GM23248 (cell line): ENCODE measurements at regions of chr10 and their contacts with region 1.

Region 1: DNA sequence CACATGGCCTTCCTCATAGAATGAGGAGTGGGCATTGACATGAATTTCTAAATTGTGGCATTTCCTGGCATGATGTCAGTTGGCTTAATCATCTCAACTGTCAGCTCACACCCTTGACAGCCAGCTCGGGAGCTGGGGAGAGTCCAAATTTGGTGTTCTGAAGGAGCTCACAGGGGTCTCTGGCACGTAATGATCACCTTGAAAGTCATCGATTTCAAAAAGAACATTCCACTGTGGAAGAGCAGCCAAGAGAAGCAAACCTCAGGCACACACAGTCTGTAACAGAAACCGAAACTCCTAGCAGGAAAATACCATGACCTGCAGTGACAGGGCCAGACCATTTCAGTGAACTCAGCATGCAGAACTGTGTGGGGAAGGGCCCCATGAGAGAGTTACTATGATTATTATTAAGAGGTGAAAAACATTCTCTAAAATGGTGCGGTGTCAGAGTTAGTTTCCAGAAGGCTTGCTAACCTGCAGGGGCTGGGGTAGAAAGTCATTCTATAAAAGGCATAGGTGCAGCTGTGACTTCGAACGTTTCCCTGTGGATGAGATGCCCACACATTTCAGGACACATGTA is 26.4 kb upstream of the KLF6 start:
- DNase-seq: peak; percentile 73
- H3K4me3 ChIP-seq: peak overlapping the region; percentile 41
- H3K27ac ChIP-seq: peak overlapping the region; percentile 88
- H3K4me1 ChIP-seq: peaks cover 57% of the 10 kb centered on the region
- H3K27me3 ChIP-seq: no peaks in the 10 kb centered on the region

Region 2: DNA sequence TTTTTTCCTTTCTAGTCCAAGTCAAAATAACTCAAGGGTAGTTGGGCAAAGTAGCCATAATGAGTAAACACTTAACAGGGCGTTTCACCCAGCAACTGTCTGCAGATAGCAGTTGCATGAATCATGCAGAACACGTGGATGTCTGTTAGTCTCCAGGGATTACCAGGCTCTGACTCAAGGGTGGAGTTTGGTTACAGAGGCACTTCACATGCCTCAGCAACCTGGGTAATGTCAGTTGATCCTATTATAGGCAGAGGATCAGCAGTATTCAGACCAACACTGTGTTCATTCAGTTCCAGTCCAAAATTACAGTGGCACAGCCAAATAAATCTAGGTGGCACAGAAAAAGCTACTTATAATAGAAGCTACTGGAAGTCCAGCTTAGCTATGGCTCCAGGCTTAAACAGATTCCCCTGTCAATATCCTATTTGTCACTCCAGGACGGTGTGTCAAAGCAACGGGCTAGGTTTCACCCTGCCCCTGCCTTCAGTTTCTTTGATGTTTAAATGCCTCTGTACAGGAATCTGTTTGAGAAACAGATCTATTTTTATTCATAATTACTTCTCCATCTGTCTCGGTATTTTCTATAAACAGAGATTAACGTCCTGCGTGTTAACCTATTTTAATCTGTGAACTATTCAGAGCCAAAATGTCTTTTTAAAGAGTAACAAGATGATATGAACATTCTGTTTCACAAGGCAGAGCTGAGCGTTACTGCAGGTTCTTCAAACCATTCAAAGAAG is 852.0 kb after region 1 on chr10:
- in situ Hi-C with region 1: loop called (anchors 25 kb)
- DNase-seq: peak; percentile 99
- H3K4me3 ChIP-seq: peak overlapping the region; percentile 66
- H3K27ac ChIP-seq: peak overlapping the region; percentile 100
- H3K4me1 ChIP-seq: peaks cover 39% of the 10 kb centered on the region
- H3K27me3 ChIP-seq: no peaks in the 10 kb centered on the region